AG04450 (cell line): ENCODE measurements at regions of chr15 and their contacts with region 1.

Region 1: GRCh38 chr15:67433495-67434099 is 87.3 kb upstream of the C15orf61 start:
- DNase-seq: peak; percentile 16
- H3K4me3 ChIP-seq: no peak overlapping the region
- H3K27ac ChIP-seq: no peak overlapping the region
- H3K27me3 ChIP-seq: no peaks in the 10 kb centered on the region
- CTCF ChIP-seq: peak; percentile 90

Region 2: DNA sequence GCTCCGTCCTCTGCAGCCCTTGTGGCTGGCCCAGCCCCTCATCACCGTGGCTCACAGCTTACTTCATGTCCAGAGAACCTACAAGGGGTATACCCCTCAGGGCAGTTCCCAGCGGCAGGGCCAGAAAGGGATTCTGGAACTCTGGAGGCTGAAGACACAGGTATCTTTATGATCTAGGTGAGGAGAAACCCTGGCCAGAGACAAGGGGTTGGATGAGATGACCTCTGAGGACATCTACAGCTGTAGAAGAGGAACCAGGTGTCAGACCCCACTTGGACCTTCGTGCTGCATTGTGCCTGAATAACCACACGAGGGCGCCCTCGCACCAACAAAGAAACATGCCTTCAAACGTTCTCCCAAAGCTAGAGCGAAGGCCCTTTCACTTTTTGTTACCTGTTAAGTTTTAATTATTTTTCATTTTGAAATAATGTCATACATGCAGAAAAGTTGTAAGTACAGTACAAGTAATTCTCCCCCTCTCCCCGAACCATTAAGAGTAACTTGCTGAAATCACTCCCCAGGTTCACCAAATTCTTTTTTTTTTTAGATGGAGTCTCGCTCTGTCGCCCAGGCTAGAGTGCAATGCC is 486.9 kb before region 1 on chr15:
- CTCF ChIA-PET with region 1: interaction called, 18 read pairs
- POLR2A ChIA-PET with region 1: no interaction called
- DNase-seq: no peak
- H3K4me3 ChIP-seq: no peak overlapping the region
- H3K27ac ChIP-seq: no peak overlapping the region
- H3K27me3 ChIP-seq: no peaks in the 10 kb centered on the region
- CTCF ChIP-seq: peak; percentile 84

Region 3: DNA sequence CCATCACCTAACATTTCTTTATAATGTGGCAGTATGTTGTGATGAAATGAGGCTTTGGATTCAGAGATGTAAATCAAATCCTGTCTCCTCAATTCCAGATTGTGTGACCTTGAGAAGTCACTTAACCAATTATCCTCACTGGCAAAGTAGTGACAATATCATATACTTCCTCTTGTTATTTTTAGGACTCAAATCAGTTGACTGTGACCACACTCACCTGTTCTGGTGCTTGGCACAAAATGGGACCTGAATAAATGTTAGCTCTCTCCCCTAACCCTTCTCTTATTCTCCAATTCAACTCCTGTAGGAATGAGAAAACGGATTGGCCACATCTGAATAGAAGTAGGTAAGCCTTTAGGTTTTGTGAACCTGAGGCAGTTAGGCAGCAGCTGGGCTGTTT is 136.9 kb before region 1 on chr15:
- CTCF ChIA-PET with region 1: no interaction called
- POLR2A ChIA-PET with region 1: no interaction called
- DNase-seq: no peak
- H3K4me3 ChIP-seq: no peak overlapping the region
- H3K27ac ChIP-seq: no peak overlapping the region
- H3K27me3 ChIP-seq: no peaks in the 10 kb centered on the region
- CTCF ChIP-seq: no peak

Region 4: DNA sequence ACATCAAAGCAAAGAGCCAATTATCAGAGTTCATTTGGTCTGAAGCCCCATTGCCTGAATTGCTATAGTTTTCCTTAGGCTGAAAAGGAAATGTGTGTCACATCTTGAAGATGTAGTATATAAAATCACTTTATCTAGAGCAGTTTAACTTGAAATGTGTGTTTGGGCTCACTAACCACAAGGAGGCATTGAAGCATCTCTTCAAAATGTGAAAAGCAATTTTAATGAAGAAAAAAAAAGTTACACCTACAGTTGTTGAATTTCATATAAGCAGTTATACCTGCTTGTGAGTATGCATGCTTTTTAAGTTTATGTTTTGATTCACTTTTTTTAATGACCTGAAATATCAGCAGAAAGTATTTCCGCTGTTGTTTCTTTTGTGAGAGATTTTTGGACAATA is 49.7 kb before region 1 on chr15:
- CTCF ChIA-PET with region 1: interaction called, 34 read pairs
- POLR2A ChIA-PET with region 1: no interaction called
- DNase-seq: no peak
- H3K4me3 ChIP-seq: no peak overlapping the region
- H3K27ac ChIP-seq: no peak overlapping the region
- H3K27me3 ChIP-seq: peaks cover 12% of the 10 kb centered on the region
- CTCF ChIP-seq: peak; percentile 33

Region 5: GRCh38 chr15:67422296-67422695 is 11.3 kb before region 1 on chr15:
- CTCF ChIA-PET with region 1: interaction called, 15 read pairs
- POLR2A ChIA-PET with region 1: no interaction called
- DNase-seq: no peak
- H3K4me3 ChIP-seq: no peak overlapping the region
- H3K27ac ChIP-seq: no peak overlapping the region
- H3K27me3 ChIP-seq: no peaks in the 10 kb centered on the region
- CTCF ChIP-seq: no peak

Region 6: DNA sequence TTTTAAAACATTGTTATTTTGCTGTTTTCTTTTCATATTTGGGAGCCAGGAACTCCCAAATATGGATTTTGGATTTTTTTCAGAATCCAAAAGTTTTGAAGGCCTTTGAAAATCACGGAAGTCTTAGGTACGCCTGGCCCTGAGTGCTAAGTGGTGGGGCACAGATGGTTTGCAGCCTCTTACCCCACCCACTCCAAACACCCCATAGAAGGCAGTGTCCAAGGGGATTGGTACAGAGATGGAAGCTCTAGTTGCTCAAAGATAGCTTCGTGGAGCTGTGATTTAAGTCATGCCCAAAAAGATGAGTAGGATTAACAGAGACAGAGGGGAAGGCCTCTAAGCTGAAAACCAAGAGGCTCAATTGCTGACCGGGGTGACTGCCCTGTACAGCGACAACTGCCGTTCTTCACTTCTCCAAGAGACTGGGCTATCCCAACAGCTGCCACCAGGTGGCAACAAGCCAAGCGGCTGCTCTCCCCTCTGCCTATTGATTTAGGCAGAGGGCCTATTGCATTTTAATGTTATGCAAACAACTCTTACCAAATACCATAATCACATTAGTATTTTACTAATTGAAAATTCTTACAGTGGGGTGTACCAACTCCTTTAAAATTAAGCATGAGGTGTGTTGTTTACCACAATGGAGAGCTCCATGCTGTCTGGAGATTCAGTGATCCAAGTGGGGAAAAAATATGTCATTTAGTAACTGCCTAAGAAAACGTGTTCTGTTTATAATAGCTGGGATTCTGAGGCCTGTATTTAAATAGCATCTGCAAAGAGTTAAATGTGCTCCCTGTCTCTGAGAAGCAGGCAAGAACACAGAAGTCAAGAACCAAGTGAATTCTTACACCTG is 23.3 kb after region 1 on chr15:
- CTCF ChIA-PET with region 1: interaction called, 10 read pairs
- POLR2A ChIA-PET with region 1: no interaction called
- DNase-seq: peak; percentile 21
- H3K4me3 ChIP-seq: no peak overlapping the region
- H3K27ac ChIP-seq: no peak overlapping the region
- H3K27me3 ChIP-seq: peaks cover 9% of the 10 kb centered on the region
- CTCF ChIP-seq: peak; percentile 93

Region 7: DNA sequence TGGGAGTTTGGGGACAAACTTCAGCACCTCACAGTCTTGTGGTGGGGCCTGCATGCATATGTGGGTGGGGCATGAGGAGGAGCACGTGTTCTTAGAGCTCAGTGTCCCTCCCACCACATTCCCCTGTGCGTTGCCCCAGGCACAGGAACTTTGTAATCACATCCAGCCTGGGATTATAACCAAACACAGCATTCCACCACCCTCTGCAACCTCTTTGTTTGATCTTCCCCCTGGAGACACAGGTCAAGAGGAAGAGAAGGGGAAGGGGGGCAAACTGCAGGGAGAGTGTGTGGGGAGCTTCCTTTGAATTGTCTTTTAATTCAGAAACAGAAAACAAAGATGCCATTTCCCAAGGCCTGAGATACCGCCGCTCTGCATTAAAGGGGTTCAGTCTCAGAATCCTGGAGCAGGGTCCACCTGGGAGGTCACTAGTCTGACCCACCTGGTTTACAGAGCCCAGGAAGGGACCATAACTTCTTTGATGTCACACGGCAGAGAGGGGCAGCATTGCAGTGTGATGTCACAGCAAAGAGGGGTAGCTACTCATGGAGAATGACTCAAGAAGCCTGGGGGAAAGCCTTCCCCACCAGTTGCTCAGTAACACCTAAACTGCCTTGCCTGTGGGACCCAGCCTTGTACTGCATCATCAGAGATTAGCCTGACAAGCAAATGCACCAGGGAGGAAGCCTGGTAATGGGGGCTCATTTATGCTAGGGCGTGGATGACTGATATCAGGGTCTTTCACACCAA is 512.5 kb after region 1 on chr15:
- CTCF ChIA-PET with region 1: no interaction called
- POLR2A ChIA-PET with region 1: no interaction called
- DNase-seq: no peak
- H3K4me3 ChIP-seq: no peak overlapping the region
- H3K27ac ChIP-seq: no peak overlapping the region
- H3K27me3 ChIP-seq: no peaks in the 10 kb centered on the region
- CTCF ChIP-seq: no peak